Left colon (tissue), 2 donors: ENCODE measurements at regions of chr16 and their contacts with region 1.

Region 1: GRCh38 chr16:66414891-66415290 is 12.2 kb upstream of the BEAN1 start:
- DNase-seq: no peak
- ATAC-seq: no peak

Region 2: DNA sequence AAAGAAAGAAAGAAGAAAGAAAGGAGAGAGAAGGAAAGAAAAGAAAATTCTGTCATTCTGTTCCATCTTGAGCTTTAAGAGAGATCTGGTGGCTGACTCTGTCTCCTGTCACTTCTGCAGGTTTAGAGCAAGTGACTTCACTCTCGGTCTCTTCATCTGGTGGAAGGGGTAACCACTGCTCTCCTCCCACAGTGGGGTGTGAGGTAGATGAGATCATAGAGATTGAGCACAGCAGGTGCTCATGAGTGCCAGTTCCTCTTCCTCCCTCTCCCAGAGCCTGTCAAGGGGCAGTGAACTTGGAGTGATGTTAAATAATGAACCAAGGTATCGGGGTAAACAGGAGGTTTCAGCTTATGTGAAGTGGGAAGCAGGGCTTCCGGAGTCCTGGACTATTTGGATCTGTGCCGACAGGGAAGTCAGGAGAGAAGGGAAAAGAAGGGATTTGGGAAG is 59.9 kb after region 1 on chr16:
- intact Hi-C with region 1: loop called in 1 of 2 experiments (anchors 5 kb)
- DNase-seq: no peak
- ATAC-seq: peak; percentile 51